ENCODE measurements at regions of chr18 and their contacts with region 1.

Region 1: GRCh38 chr18:43180814-43181213 is 65.3 kb upstream of the RIT2 start:
- DNase-seq: no peak

Region 2: GRCh38 chr18:43236921-43237560 is 56.2 kb after region 1 on chr18:
- intact Hi-C with region 1: loop called (anchors 10 kb)
- DNase-seq: no peak